KBM-7 (cell line): ENCODE measurements at regions of chr20 and their contacts with region 1.

Region 1: GRCh38 chr20:19376451-19377229 is 164.2 kb downstream of the SLC24A3 start:
- DNase-seq: no peak

Region 2: DNA sequence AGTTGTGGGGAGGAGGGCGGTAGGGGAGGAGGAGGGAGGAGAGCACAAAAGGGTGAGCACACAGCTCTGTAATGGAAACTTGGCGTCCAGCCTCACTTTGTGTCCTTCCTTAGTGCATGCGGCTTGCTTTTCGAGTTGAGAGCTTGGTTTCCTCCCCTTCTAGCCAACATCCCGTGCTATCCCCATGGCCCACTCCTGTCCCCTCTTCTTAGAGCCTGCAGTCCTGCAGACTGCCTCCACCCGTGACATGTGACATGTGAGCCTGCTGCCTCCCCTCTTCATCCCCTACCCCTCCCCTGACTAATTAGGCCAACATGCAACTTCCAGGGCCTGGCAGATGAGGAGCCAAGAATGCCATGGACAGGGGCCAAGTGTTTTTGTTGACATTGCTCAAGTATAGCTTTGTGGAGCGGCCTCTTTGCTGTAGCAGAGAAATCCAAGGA is 101.0 kb before region 1 on chr20:
- in situ Hi-C with region 1: loop called (anchors 25 kb)
- DNase-seq: no peak